CD4-positive, alpha-beta T cell (primary cell): ENCODE measurements at regions of chr5 and their contacts with region 1.

Region 1: GRCh38 chr5:95669540-95669939 is 13.3 kb downstream of the SPATA9 start:
- DNase-seq: no peak
- ATAC-seq: no peak
- H3K4me3 ChIP-seq: no peak overlapping the region
- H3K4me3 Mint-ChIP-seq: no peak overlapping the region
- H3K27ac ChIP-seq: no peak overlapping the region
- H3K27ac Mint-ChIP-seq: no peak overlapping the region
- H3K4me1 ChIP-seq: no peaks in the 10 kb centered on the region
- H3K4me1 Mint-ChIP-seq: no peaks in the 10 kb centered on the region
- H3K27me3 ChIP-seq: no peaks in the 10 kb centered on the region
- H3K27me3 Mint-ChIP-seq: no peaks in the 10 kb centered on the region
- CTCF ChIP-seq: no peak

Region 2: GRCh38 chr5:95727764-95728191 is 58.2 kb after region 1 on chr5:
- CTCF ChIA-PET with region 1: no interaction called
- POLR2A ChIA-PET with region 1: no interaction called
- intact Hi-C with region 1: loop called in 1 of 2 experiments (anchors 5 kb)
- DNase-seq: peak in 1 of 14 experiments; percentile 12
- ATAC-seq: no peak
- H3K4me3 ChIP-seq: no peak overlapping the region
- H3K4me3 Mint-ChIP-seq: no peak overlapping the region
- H3K27ac ChIP-seq: no peak overlapping the region
- H3K27ac Mint-ChIP-seq: peak overlapping the region; percentile 3
- H3K4me1 ChIP-seq: peaks cover 16% of the 10 kb centered on the region
- H3K4me1 Mint-ChIP-seq: peaks cover 62% of the 10 kb centered on the region
- H3K27me3 ChIP-seq: peaks cover 9 to 24% of the 10 kb centered on the region in 2 experiments
- H3K27me3 Mint-ChIP-seq: peaks cover 20% of the 10 kb centered on the region
- CTCF ChIP-seq: no peak